ENCODE measurements at regions of chr20 and their contacts with region 1.

Region 1: DNA sequence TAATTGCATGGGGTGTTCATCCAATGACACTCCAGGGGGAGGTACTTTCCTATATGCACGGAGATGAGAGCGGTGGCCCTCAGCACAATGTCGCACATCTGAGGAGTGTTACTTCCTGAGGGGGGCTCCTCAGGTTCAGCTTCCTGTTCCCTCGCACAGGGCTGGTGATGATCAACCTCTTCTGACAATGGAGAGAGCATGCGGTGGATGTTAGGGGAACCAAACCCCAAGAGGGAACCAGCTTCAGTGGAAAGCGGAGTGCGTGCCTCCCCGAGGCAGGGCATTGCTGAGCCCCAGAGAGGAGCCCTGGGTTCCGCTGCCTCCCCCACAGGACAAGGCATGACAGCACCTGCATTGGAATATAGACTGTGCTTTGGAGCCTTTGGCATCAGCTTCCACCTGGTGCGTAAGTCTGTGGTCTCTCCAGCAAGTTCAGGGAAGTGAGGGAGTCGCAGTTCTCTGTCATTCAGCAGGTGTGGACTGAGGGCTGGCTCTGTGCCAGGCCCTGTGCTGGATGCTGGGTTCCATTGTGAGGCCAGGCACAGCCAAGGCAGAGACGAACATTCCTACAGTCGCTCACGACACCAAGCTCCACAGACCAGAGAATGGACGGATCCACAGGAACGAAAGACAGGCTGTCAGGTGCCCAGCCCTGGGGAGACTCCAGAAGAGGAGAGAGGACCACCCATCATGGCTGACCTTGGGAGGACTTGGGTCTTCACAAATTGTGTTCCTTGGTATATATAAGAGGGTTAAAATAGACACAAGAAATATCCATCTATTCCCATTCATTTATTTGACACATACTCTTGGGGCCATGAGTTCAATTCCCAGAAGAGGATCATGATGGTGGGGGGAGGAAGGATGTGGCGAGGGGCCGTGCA is 3.9 kb upstream of the ZNF831 start:
- DNase-seq: peak; percentile 44 to 92 (median 83)
- ATAC-seq: peak; percentile 81 to 90 (median 85)
- H3K4me3 ChIP-seq: peak overlapping the region; percentile 1 to 73
- H3K4me3 Mint-ChIP-seq: peak overlapping the region; percentile 82 to 89 (median 87)
- H3K27ac ChIP-seq: peak overlapping the region; percentile 96
- H3K27ac Mint-ChIP-seq: peak overlapping the region; percentile 99
- H3K4me1 ChIP-seq: peaks cover 51 to 59% of the 10 kb centered on the region in 2 experiments
- H3K4me1 Mint-ChIP-seq: peaks cover 85 to 89% (median 87%) of the 10 kb centered on the region in 3 donors
- H3K27me3 ChIP-seq: no peaks in the 10 kb centered on the region
- H3K27me3 Mint-ChIP-seq: no peaks in the 10 kb centered on the region

Region 2: GRCh38 chr20:59032023-59032712 is 127.6 kb before region 1 on chr20 and contains the start of gene ATP5F1E:
- CTCF ChIA-PET with region 1: no interaction called
- POLR2A ChIA-PET with region 1: interaction called in 1 of 2 experiments, 11 read pairs
- DNase-seq: peak; percentile 91 to 98 (median 96)
- ATAC-seq: peak; percentile 95 to 99 (median 96)
- H3K4me3 ChIP-seq: peak within 1 kb of the TSS; percentile 78 to 88
- H3K4me3 Mint-ChIP-seq: peak within 1 kb of the TSS; percentile 91 to 95 (median 94)
- H3K27ac ChIP-seq: peak within 1 kb of the TSS; percentile 78
- H3K27ac Mint-ChIP-seq: peak within 1 kb of the TSS; percentile 94 to 96
- H3K4me1 ChIP-seq: peaks cover 27 to 37% of the 10 kb centered on the region in 2 experiments
- H3K4me1 Mint-ChIP-seq: peaks cover 54 to 59% (median 56%) of the 10 kb centered on the region in 3 donors
- H3K27me3 ChIP-seq: no peaks in the 10 kb centered on the region
- H3K27me3 Mint-ChIP-seq: no peaks in the 10 kb centered on the region
- total RNA-seq, gene ATP5F1E: 50.6 to 105 (median 62.4) TPM

Region 3: DNA sequence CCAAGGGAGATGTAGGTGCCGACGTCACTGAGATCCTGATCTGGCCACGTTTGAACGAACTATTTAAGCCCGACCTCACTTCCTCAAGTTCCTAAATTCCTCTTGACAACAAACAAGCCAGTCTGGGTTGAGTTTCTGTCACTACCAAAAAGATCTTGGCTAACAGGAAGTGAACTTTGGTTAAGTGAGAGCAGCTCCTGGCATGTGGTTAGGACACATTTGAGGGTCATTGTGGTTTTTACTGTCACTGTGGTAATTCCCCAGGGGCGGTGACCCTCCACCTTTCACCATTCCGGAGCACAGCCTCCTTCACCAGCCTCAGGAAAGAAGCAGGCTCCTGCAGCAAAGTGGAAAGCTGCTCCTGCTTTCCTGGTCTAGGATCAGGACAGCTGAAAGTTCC is 39.2 kb before region 1 on chr20:
- CTCF ChIA-PET with region 1: interaction called, 4 to 22 read pairs
- POLR2A ChIA-PET with region 1: interaction called, 33 to 95 read pairs
- DNase-seq: peak in 27 of 35 experiments; percentile 13 to 71 (median 36)
- ATAC-seq: peak in 3 of 4 experiments; percentile 13 to 17 (median 14)
- H3K4me3 ChIP-seq: no peak overlapping the region
- H3K4me3 Mint-ChIP-seq: peak overlapping the region in 1 of 3 donors; percentile 84
- H3K27ac ChIP-seq: peak overlapping the region; percentile 89
- H3K27ac Mint-ChIP-seq: peak overlapping the region; percentile 99 to 100
- H3K4me1 ChIP-seq: peaks cover 68 to 76% of the 10 kb centered on the region in 2 experiments
- H3K4me1 Mint-ChIP-seq: peaks cover 86 to 95% (median 91%) of the 10 kb centered on the region in 3 donors
- H3K27me3 ChIP-seq: no peaks in the 10 kb centered on the region
- H3K27me3 Mint-ChIP-seq: no peaks in the 10 kb centered on the region

Region 4: DNA sequence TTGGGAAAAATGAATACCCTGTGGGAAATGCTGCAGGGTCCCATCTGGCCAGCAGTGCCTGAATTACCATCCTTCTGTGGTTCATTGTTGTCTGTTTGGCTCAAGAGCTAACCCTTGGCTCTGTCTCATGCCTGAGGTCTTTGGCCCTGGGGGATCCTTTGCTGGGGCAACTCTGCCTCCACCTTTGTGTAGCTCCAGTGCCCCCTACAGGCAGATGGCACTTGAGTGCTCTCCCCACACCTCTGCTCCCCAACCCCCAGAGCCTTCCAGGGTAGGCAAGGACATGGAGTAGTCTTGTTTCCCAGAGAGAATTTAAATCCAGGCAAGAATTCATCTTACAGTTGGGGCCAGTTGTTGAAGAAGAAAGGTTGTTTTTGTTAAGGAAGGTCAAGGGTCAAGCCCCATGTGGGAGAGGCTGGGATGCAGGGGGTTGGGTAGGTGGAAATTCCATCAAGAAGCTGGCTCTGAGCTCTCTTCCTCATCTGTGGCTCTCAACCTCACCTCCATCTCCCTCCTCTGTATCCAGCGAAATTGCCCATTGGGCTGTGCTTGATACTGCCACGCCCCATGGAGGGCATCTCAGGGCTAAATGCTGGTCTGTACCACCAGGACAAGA is 48.1 kb after region 1 on chr20:
- CTCF ChIA-PET with region 1: interaction called, 3 to 10 read pairs
- POLR2A ChIA-PET with region 1: interaction called in 1 of 2 experiments, 6 read pairs
- DNase-seq: peak; percentile 61 to 90 (median 80)
- ATAC-seq: peak; percentile 90 to 98 (median 92)
- H3K4me3 ChIP-seq: no peak overlapping the region
- H3K4me3 Mint-ChIP-seq: peak overlapping the region in 1 of 3 donors; percentile 56
- H3K27ac ChIP-seq: peak overlapping the region; percentile 30
- H3K27ac Mint-ChIP-seq: peak overlapping the region; percentile 73 to 88
- H3K4me1 ChIP-seq: peaks cover 18 to 31% of the 10 kb centered on the region in 2 experiments
- H3K4me1 Mint-ChIP-seq: peaks cover 36 to 41% (median 41%) of the 10 kb centered on the region in 3 donors
- H3K27me3 ChIP-seq: no peaks in the 10 kb centered on the region
- H3K27me3 Mint-ChIP-seq: no peaks in the 10 kb centered on the region

Measured in T-cell (primary cell).